ENCODE measurements at regions of chr12 and their contacts with region 1.

Region 1: DNA sequence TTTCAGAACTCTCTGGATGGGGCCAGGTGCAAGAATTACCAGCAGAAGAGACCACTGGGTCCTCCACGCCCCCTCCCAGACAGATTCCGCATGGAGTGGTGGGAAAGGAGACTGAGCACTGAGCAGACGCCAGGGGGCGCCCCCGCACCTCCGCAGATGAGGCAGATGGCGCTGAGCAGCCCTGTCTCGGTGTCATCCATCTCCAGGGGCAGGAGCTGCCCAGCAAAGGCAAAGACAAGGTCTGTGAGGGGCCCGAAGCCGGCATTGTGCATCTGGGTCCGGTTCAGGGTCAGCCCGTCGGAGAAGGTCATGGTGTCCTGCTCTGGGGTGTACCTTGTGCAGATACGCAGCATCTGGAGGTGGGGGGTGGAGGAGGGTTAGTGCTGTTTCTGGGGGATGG is 6.3 kb upstream of the ITGB7 start:
- DNase-seq: peak; percentile 88
- ATAC-seq: peak; percentile 64
- H3K4me3 Mint-ChIP-seq: no peak overlapping the region
- H3K27ac Mint-ChIP-seq: peak overlapping the region; percentile 65
- H3K4me1 Mint-ChIP-seq: peaks cover 92% of the 10 kb centered on the region
- H3K27me3 Mint-ChIP-seq: no peaks in the 10 kb centered on the region

Region 2: GRCh38 chr12:53180220-53180930 is 33.0 kb before region 1 on chr12 and contains the starts of genes CSAD and ZNF740:
- CTCF ChIA-PET with region 1: interaction called, 38 read pairs
- POLR2A ChIA-PET with region 1: interaction called, 6 read pairs
- DNase-seq: peak; percentile 98
- ATAC-seq: peak; percentile 97
- H3K4me3 Mint-ChIP-seq: peak within 1 kb of the TSS; percentile 86
- H3K27ac Mint-ChIP-seq: peak within 1 kb of the TSS; percentile 98
- H3K4me1 Mint-ChIP-seq: peaks cover 50% of the 10 kb centered on the region
- H3K27me3 Mint-ChIP-seq: no peaks in the 10 kb centered on the region
- total RNA-seq, gene CSAD: 15.7 to 17.0 TPM
- total RNA-seq, gene ZNF740: 28.2 to 31.4 TPM

Region 3: GRCh38 chr12:53200458-53201176 is 12.7 kb before region 1 on chr12:
- CTCF ChIA-PET with region 1: interaction called, 13 read pairs
- POLR2A ChIA-PET with region 1: interaction called, 4 read pairs
- DNase-seq: peak; percentile 57
- ATAC-seq: peak; percentile 44
- H3K4me3 Mint-ChIP-seq: peak overlapping the region; percentile 68
- H3K27ac Mint-ChIP-seq: peak overlapping the region; percentile 88
- H3K4me1 Mint-ChIP-seq: peaks cover 79% of the 10 kb centered on the region
- H3K27me3 Mint-ChIP-seq: no peaks in the 10 kb centered on the region

Region 4: GRCh38 chr12:53231826-53232645 is 18.7 kb after region 1 on chr12 and contains the start of gene RARG:
- CTCF ChIA-PET with region 1: interaction called, 17 read pairs
- POLR2A ChIA-PET with region 1: interaction called, 6 read pairs
- DNase-seq: peak; percentile 74
- ATAC-seq: peak; percentile 76
- H3K4me3 Mint-ChIP-seq: peak within 1 kb of the TSS; percentile 83
- H3K27ac Mint-ChIP-seq: peak within 1 kb of the TSS; percentile 76
- H3K4me1 Mint-ChIP-seq: peaks cover 66% of the 10 kb centered on the region
- H3K27me3 Mint-ChIP-seq: no peaks in the 10 kb centered on the region
- total RNA-seq, gene RARG: 44.1 to 45.9 TPM

Region 5: DNA sequence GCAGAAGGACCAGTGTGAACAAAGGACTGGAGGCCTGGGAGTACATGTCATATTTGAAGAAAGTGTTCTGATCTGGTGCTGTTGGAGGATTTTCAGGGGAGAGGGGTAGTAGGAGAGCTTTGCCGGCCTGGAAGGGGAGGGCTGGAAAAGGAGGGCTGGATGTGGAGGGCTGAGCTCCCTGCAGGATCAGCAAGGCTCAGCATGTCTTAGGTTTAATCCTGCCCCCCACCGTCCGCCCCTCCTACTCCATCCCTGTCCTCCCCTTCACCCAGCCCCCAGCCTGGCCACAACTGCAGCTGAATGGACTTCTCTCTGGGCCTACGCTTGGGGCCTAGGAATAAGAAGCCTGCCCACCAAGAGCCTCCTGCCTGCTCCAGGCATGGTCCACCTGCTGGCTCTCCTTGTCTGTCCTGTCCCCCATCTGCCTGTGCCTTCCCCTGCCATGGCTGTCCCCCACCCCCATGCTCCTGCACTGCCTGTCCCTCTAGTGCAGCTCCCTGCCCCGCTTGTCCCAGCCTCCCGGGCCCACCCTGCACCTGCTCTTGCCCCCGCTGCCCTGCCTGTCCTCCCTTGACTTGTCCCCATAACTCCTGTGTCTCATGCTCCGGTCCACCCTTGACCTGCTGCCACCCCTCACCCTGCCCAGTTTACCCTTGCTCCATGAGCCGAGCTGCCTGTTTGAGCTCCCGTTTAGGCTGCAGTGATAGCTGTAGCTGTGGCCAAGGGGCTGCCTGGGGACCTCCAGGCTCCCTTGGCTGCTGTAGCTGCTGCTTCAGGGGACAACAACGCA is 28.5 kb after region 1 on chr12:
- CTCF ChIA-PET with region 1: interaction called, 19 read pairs
- POLR2A ChIA-PET with region 1: interaction called, 3 read pairs
- DNase-seq: no peak
- ATAC-seq: no peak
- H3K4me3 Mint-ChIP-seq: no peak overlapping the region
- H3K27ac Mint-ChIP-seq: no peak overlapping the region
- H3K4me1 Mint-ChIP-seq: peaks cover 12% of the 10 kb centered on the region
- H3K27me3 Mint-ChIP-seq: peaks cover 32% of the 10 kb centered on the region

Region 6: GRCh38 chr12:53251477-53252348 is 38.4 kb after region 1 on chr12:
- CTCF ChIA-PET with region 1: interaction called, 188 read pairs
- POLR2A ChIA-PET with region 1: interaction called, 8 read pairs
- DNase-seq: peak; percentile 74
- ATAC-seq: peak; percentile 87
- H3K4me3 Mint-ChIP-seq: peak overlapping the region; percentile 99
- H3K27ac Mint-ChIP-seq: peak overlapping the region; percentile 94
- H3K4me1 Mint-ChIP-seq: peaks cover 54% of the 10 kb centered on the region
- H3K27me3 Mint-ChIP-seq: peaks cover 3% of the 10 kb centered on the region

Region 7: GRCh38 chr12:53295070-53295890 is 81.9 kb after region 1 on chr12 and contains the start of gene PFDN5:
- CTCF ChIA-PET with region 1: interaction called, 192 read pairs
- POLR2A ChIA-PET with region 1: interaction called, 4 read pairs
- DNase-seq: peak; percentile 93
- ATAC-seq: peak; percentile 88
- H3K4me3 Mint-ChIP-seq: peak within 1 kb of the TSS; percentile 97
- H3K27ac Mint-ChIP-seq: peak within 1 kb of the TSS; percentile 92
- H3K4me1 Mint-ChIP-seq: peaks cover 40% of the 10 kb centered on the region
- H3K27me3 Mint-ChIP-seq: no peaks in the 10 kb centered on the region
- total RNA-seq, gene PFDN5: 292 to 307 TPM

Measured in activated CD8-positive, alpha-beta T cell treated with anti-CD3 and anti-CD28 coated beads, Interleukin-2, amount 10 ng/mL, durations not matched to agents 7 days and 5 days (primary cell).